ENCODE measurements at regions of chr10 and their contacts with region 1.

Region 1: DNA sequence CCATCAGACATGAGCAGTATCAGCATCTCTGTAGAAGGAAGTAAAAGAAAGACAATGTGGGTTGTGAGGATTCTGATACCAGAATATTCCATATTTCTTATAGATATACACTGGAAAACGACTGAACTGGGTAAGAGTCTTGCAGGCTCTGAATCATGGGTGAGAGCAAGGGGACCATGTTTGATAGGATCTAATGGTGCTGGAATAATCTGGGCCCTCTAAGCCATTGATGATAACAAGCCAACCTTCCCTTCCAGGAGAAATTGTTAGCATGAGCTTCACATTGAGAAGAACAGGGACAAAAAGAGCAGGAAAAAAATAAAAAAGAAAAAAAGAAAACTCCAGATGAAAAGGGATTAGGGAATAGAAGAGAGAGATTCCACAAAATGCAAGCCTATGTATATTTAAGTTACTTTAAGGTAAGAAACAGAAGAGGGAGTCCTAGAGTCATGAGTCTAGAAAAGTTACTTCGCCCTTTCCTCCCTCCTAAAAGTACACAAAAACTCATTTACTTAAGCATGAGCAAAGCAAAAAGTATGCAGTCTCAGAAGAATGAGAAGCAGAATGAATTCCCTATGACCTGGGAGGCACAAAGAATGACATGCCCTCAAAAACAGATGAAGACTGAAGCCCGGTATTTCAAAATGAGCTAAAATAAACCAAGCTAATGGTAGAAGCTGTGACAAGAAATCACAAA is 181.9 kb downstream of the TMEM26 start:
- DNase-seq: no peak
- ATAC-seq: no peak
- H3K4me3 ChIP-seq: no peak overlapping the region
- H3K4me1 ChIP-seq: peaks cover 3% of the 10 kb centered on the region
- CTCF ChIP-seq: no peak

Region 2: GRCh38 chr10:61140765-61141392 is 130.4 kb before region 1 on chr10:
- intact Hi-C with region 1: loop called in 1 of 2 experiments (anchors 10 kb)
- DNase-seq: peak in 1 of 3 donors; percentile 28
- ATAC-seq: peak; percentile 46
- H3K4me3 ChIP-seq: no peak overlapping the region
- H3K4me1 ChIP-seq: no peaks in the 10 kb centered on the region
- CTCF ChIP-seq: peak; percentile 34

Measured in mucosa of descending colon (tissue), 3 donors.